IMR-90 (cell line): ENCODE measurements at regions of chr2 and their contacts with region 1.

Region 1: DNA sequence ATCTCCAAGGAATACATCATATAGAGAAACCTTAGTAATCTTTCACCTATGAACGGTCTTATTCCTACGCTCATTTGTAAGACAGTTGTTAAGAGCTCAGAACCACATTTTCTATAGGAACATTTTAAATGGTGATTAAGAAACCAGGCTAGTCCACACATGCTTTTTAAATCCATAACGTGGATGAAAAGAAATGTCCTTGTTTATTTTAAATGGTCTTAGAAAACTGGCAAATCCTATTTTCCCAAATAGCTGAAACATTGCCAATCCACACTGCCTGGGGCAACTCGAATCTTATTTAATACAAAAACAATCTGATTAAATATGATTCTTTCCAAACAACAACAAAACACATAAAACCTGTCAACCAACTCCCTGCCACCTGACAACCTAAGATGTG is 23.7 kb downstream of the METTL8 start:
- DNase-seq: peak; percentile 53
- ATAC-seq: peak; percentile 41
- H3K4me3 ChIP-seq: no peak overlapping the region
- H3K27ac ChIP-seq: no peak overlapping the region
- H3K4me1 ChIP-seq: peaks cover 10% of the 10 kb centered on the region
- H3K27me3 ChIP-seq: no peaks in the 10 kb centered on the region
- CTCF ChIP-seq: no peak
- POLR2A ChIP-seq: no peak
- RAD21 ChIP-seq: no peak

Region 2: GRCh38 chr2:171237751-171238505 is 172.2 kb before region 1 on chr2:
- CTCF ChIA-PET with region 1: no interaction called
- POLR2A ChIA-PET with region 1: no interaction called
- dilution Hi-C with region 1: no loop called
- in situ Hi-C with region 1: no loop called
- intact Hi-C with region 1: no loop called
- DNase-seq: no peak
- ATAC-seq: no peak
- H3K4me3 ChIP-seq: no peak overlapping the region
- H3K27ac ChIP-seq: no peak overlapping the region
- H3K4me1 ChIP-seq: no peaks in the 10 kb centered on the region
- H3K27me3 ChIP-seq: no peaks in the 10 kb centered on the region
- CTCF ChIP-seq: no peak
- POLR2A ChIP-seq: no peak
- RAD21 ChIP-seq: no peak

Region 3: GRCh38 chr2:171330155-171330956 is 79.7 kb before region 1 on chr2:
- CTCF ChIA-PET with region 1: no interaction called
- POLR2A ChIA-PET with region 1: no interaction called
- dilution Hi-C with region 1: no loop called
- in situ Hi-C with region 1: no loop called
- intact Hi-C with region 1: no loop called
- DNase-seq: no peak
- ATAC-seq: no peak
- H3K4me3 ChIP-seq: no peak overlapping the region
- H3K27ac ChIP-seq: no peak overlapping the region
- H3K4me1 ChIP-seq: peaks cover 3% of the 10 kb centered on the region; the same call in 1 of the 2 replicates
- H3K27me3 ChIP-seq: no peaks in the 10 kb centered on the region
- CTCF ChIP-seq: no peak
- POLR2A ChIP-seq: no peak
- RAD21 ChIP-seq: no peak

Region 4: DNA sequence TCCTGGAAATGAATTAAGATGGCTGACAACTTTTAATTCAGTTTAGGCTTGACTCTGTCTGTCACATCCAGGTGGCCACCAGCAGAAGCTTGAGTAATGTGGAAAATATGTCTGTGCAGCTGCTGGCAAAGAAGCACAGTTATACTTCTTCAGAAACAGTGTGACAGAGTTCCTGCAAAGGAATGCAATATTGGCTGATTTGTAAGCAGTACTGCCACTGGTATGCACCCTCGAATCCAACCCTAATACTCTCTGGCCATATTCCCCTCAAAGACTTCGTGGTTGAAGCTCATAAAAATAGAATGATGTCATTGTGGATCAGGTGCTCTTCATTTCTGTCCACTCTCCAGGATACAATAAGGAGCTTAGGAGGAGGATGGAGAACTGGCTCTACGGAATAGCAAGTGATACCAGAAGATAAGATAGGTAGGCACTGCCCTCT is 62.5 kb before region 1 on chr2:
- CTCF ChIA-PET with region 1: interaction called, 3 read pairs
- POLR2A ChIA-PET with region 1: no interaction called
- dilution Hi-C with region 1: no loop called
- in situ Hi-C with region 1: no loop called
- intact Hi-C with region 1: loop called (anchors 5 kb)
- DNase-seq: peak; percentile 93
- ATAC-seq: peak; percentile 96
- H3K4me3 ChIP-seq: no peak overlapping the region
- H3K27ac ChIP-seq: peak overlapping the region; percentile 19; the same call in 1 of the 2 replicates
- H3K4me1 ChIP-seq: peaks cover 11% of the 10 kb centered on the region
- H3K27me3 ChIP-seq: no peaks in the 10 kb centered on the region
- CTCF ChIP-seq: no peak
- POLR2A ChIP-seq: no peak
- RAD21 ChIP-seq: no peak

Region 5: GRCh38 chr2:171389325-171389724 is 20.8 kb before region 1 on chr2:
- CTCF ChIA-PET with region 1: no interaction called
- POLR2A ChIA-PET with region 1: interaction called, 20 read pairs
- dilution Hi-C with region 1: no loop called
- in situ Hi-C with region 1: no loop called
- intact Hi-C with region 1: no loop called
- DNase-seq: no peak
- ATAC-seq: no peak
- H3K4me3 ChIP-seq: no peak overlapping the region
- H3K27ac ChIP-seq: no peak overlapping the region
- H3K4me1 ChIP-seq: peaks cover 3% of the 10 kb centered on the region
- H3K27me3 ChIP-seq: no peaks in the 10 kb centered on the region
- CTCF ChIP-seq: no peak
- POLR2A ChIP-seq: no peak
- RAD21 ChIP-seq: no peak